ENCODE measurements at regions of chr14 and their contacts with region 1.

Region 1: DNA sequence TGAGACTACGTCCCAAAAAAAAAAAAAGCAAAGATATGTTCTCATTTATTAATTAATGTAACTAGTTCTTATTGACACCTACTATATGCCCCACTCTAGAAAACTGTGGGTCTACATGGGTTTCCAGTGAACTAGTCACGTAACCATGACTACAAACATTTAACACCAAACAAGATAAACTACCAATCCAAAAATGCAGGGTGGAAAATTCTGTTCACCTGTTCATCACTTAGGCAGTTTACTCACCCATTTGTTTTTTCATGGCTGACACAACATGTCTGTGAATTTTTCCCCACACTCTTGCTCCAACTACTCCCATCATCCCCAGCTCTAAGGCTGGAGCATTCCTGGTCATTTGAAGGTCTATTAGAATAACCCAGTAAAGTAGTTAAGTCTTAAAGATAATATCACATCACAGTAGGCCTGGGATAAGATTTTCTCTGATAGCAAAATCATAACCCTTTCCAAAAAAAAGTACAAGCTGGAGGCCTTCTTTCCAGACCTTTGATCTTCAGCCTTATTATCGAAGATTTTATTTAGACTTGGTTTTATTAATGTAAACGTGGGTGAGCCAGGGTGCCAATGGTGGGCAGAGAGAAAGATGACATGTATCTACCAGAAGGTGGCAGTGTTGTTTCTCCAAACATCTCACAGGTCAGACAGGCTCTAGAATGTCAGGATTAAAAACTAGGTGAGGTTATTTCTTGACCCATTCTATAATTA is 61.6 kb upstream of the DAAM1 start:
- DNase-seq: no peak
- H3K4me3 ChIP-seq: no peak overlapping the region
- H3K27me3 ChIP-seq: no peaks in the 10 kb centered on the region
- CTCF ChIP-seq: peak; percentile 68

Region 2: GRCh38 chr14:58994130-58994529 is 132.7 kb before region 1 on chr14:
- CTCF ChIA-PET with region 1: no interaction called
- POLR2A ChIA-PET with region 1: no interaction called
- DNase-seq: no peak
- H3K4me3 ChIP-seq: no peak overlapping the region
- H3K27me3 ChIP-seq: 0 out of 2 replicates have a peak, but pooled peaks cover 4% of the 10 kb centered on the region
- CTCF ChIP-seq: no peak

Region 3: GRCh38 chr14:59028476-59029202 is 98.2 kb before region 1 on chr14:
- CTCF ChIA-PET with region 1: interaction called, 18 read pairs
- POLR2A ChIA-PET with region 1: no interaction called
- DNase-seq: peak; percentile 93
- H3K4me3 ChIP-seq: no peak overlapping the region
- H3K27me3 ChIP-seq: no peaks in the 10 kb centered on the region
- CTCF ChIP-seq: peak; percentile 91

Region 4: DNA sequence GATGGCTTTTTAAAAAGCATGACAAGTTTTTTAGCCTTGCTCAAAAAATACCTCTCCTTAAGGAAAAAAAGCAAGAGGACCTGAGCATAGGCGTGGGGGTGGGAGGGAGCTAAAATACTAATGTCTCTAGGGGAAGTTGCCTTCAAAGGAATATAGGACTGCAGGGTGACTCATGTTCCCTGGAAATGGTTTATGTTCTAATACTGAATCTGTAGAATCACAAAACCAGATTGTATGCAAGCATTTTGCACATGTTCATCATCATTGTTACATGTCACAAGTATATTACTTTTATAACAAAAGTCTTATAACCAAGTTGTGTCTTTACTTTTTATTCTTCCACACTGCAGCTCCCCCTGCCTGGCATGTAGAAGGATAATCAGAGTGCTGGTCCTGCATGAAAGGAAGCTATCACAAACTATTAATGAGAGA is 301.7 kb after region 1 on chr14:
- CTCF ChIA-PET with region 1: interaction called, 11 read pairs
- POLR2A ChIA-PET with region 1: no interaction called
- DNase-seq: no peak
- H3K4me3 ChIP-seq: no peak overlapping the region
- H3K27me3 ChIP-seq: no peaks in the 10 kb centered on the region
- CTCF ChIP-seq: peak; percentile 43

Region 5: GRCh38 chr14:59438195-59438647 is 311.4 kb after region 1 on chr14:
- CTCF ChIA-PET with region 1: interaction called, 43 read pairs
- POLR2A ChIA-PET with region 1: no interaction called
- DNase-seq: no peak
- H3K4me3 ChIP-seq: no peak overlapping the region
- H3K27me3 ChIP-seq: no peaks in the 10 kb centered on the region
- CTCF ChIP-seq: no peak

Region 6: GRCh38 chr14:59450716-59451115 is 323.8 kb after region 1 on chr14:
- CTCF ChIA-PET with region 1: interaction called, 37 read pairs
- POLR2A ChIA-PET with region 1: no interaction called
- DNase-seq: no peak
- H3K4me3 ChIP-seq: no peak overlapping the region
- H3K27me3 ChIP-seq: no peaks in the 10 kb centered on the region
- CTCF ChIP-seq: no peak

Measured in BJ (cell line).